MCF 10A (cell line): ENCODE measurements at regions of chr1 and their contacts with region 1.

Region 1: DNA sequence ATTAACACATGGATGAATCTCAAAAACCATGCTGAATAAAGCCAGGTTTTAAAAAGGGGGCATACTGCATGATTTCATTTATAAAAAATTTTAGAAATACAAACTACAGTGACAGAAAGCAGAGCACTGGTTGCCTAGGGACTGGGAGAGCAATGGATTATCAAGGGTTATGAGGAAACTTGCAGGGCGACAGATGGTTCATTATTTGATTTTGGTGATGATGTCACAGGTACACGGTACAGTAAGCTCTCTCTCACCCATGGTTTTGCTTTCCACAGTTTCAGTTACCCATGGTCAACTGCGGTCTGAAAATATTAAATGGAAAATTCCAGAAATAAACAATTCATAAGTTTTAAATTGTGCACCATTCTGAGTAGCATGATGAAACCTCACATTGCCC is 14.1 kb downstream of the VAMP4 start:
- DNase-seq: no peak
- H3K4me3 Mint-ChIP-seq: no peak overlapping the region
- H3K27ac Mint-ChIP-seq: no peak overlapping the region
- H3K4me1 Mint-ChIP-seq: peaks cover 10% of the 10 kb centered on the region
- H3K27me3 Mint-ChIP-seq: no peaks in the 10 kb centered on the region
- CTCF ChIP-seq: no peak

Region 2: DNA sequence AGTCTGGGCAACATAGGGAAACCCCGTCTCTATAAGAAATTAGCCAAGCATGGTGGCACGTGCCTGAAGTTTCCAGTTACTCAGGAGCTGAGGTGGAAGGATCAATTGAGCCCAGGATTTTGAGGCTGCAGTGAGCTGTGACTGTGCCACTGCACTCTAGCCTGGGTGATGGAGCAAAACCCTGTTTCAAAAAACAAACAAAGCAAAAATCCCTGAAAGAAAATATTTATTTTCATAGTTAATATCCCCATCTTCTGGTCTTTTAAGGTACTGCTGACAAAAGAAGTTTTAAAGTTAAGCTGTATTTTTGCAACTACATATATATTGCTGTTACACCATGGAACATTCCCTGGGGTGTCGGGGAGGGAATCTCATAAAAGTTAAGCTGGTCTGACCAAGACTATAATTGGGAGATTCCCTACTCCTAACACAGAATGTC is 11.9 kb before region 1 on chr1:
- CTCF ChIA-PET with region 1: interaction called, 16 read pairs
- POLR2A ChIA-PET with region 1: interaction called, 3 read pairs
- intact Hi-C with region 1: no loop called
- DNase-seq: peak; percentile 18
- H3K4me3 Mint-ChIP-seq: no peak overlapping the region
- H3K27ac Mint-ChIP-seq: no peak overlapping the region
- H3K4me1 Mint-ChIP-seq: peaks cover 6% of the 10 kb centered on the region
- H3K27me3 Mint-ChIP-seq: no peaks in the 10 kb centered on the region
- CTCF ChIP-seq: peak; percentile 44

Region 3: GRCh38 chr1:171754353-171754705 is 26.6 kb after region 1 on chr1:
- CTCF ChIA-PET with region 1: no interaction called
- POLR2A ChIA-PET with region 1: no interaction called
- intact Hi-C with region 1: no loop called
- DNase-seq: peak; percentile 7
- H3K4me3 Mint-ChIP-seq: no peak overlapping the region
- H3K27ac Mint-ChIP-seq: peak overlapping the region; percentile 80
- H3K4me1 Mint-ChIP-seq: peaks cover 10% of the 10 kb centered on the region
- H3K27me3 Mint-ChIP-seq: no peaks in the 10 kb centered on the region
- CTCF ChIP-seq: no peak